Psoas muscle (tissue), 8 donors: ENCODE measurements at regions of chr2 and their contacts with region 1.

Region 1: GRCh38 chr2:41840702-41841551 is 206.9 kb upstream of the PKDCC start:
- DNase-seq: peak; percentile 95 to 98
- ATAC-seq: peak; percentile 100
- H3K4me3 ChIP-seq: peak overlapping the region; percentile 74
- H3K27ac ChIP-seq: peak overlapping the region; percentile 78
- H3K4me1 ChIP-seq: peaks cover 6% of the 10 kb centered on the region
- H3K27me3 ChIP-seq: no peaks in the 10 kb centered on the region
- CTCF ChIP-seq: peak; percentile 96

Region 2: DNA sequence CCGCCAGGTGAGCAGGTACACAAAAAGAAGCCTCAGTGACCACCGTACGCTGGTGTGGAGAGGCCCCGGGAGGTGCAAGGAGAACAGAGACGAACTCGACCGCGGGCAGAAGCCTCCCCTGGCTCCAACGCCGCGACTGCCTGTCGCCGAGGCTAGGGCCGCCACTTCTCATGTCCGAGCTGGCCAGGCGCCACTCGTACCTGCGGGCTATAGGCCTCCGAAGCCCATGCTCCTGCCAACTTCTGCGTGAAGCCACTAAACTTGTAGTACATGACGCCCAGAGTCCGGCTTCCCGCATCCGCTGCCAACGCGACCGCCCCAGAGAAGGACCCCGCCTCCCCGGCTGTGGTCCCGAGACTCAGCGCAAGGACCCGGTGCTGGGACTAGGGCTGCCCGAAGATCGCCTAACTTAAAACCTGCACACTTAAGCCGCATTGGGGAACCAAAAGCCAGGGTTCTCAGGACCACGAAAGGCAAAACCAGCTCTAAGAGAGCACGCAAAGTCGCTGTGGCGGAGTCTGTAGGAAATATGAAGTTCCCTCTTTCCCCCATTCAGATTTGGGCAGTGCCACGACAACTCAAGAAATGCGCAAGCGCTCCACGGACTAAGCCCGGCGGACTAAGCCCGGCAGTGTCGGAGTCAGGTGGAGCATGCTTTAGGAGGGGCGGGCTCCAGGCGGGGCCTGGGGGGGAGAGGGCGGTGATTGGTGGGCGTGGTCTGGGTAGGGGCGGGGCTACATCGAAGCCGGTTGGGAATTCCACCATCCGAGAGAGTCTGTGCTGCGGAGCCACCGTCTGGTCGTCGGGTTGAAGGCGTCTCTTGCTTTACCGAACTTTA is 520.2 kb after region 1 on chr2 and contains the start of gene COX7A2L:
- intact Hi-C with region 1: loop called (anchors 5 to 10 kb)
- DNase-seq: peak; percentile 96 to 99
- ATAC-seq: peak; percentile 97 to 100 (median 99)
- H3K4me3 ChIP-seq: peak within 1 kb of the TSS; percentile 81
- H3K27ac ChIP-seq: peak within 1 kb of the TSS; percentile 93
- H3K4me1 ChIP-seq: peaks cover 37% of the 10 kb centered on the region
- H3K27me3 ChIP-seq: no peaks in the 10 kb centered on the region
- CTCF ChIP-seq: peak; percentile 28
- total RNA-seq, gene COX7A2L: 58.1 to 85.0 (median 62.4) TPM